Breast epithelium (tissue), 4 donors: ENCODE measurements at regions of chr12 and their contacts with region 1.

Region 1: DNA sequence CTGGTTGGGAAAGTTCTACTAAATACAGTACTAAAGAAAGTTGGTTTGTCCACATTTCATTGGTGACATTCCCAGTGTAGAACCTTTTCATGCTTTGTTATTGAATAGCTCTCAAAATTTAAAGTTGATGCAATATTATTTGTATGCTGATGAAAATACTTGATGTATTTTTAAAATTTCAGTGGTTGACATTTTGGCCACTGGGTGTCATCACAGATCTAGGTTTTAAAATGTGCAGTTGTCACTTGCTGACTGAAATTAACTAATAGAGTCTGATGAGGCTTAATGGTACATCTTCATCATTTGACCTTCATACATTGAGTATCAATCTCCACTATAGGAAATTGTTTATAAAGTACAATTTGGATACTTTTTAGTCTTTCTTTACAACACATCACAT is 37.1 kb downstream of the CMAS start:
- DNase-seq: no peak
- H3K4me3 ChIP-seq: no peak overlapping the region
- H3K27ac ChIP-seq: no peak overlapping the region
- H3K4me1 ChIP-seq: no peaks in the 10 kb centered on the region
- H3K27me3 ChIP-seq: no peaks in the 10 kb centered on the region
- CTCF ChIP-seq: peak; percentile 31 to 52 (median 49)
- POLR2A ChIP-seq: no peak

Region 2: DNA sequence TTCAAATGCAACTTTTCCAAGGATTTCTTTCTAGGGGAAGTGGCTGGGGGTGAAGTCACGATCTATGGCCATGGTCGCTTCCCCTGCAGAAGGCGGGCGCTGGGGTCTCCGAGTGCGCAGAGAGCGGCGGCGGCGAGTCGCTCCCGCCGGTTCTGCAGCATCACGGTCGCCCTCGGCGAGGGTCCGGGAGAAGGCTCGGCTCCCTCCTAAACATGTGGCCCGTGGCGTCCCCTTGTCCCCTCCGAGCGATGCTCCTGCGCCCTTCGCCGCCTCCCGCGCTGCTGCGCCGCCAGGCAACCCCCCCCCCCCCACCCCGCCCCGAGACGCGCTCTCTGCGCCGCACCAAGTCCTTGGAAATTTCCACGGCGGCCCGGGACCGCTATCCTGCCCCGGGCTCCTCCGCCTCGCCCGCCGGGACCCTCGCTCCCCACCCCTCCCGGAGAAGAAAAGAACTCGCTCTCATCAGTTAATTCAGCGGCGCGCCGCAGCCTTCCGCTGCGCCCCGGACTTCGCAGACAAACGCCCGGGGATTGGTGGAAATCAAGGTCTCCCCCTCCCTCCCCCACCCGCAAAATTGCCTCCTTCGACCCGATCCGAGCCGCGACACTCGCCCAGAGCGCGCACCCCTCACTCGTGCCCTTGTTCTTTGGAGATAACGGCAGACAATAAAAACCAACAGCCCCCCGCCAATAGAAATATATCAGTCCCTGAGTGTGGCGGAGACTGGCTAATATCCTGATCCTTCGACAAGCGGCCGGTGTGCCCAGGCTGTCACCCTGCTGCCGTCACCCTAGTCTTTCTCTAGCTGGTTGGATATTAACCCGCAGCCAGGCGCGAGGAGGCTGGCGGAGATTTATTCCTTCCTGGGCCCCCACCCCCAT is 251.5 kb after region 1 on chr12 and contains the start of gene ST8SIA1:
- intact Hi-C with region 1: loop called (anchors 5 kb)
- DNase-seq: no peak
- H3K4me3 ChIP-seq: peak within 1 kb of the TSS; percentile 60 to 91 (median 67)
- H3K27ac ChIP-seq: peak within 1 kb of the TSS; percentile 71 to 85
- H3K4me1 ChIP-seq: no peaks in the 10 kb centered on the region
- H3K27me3 ChIP-seq: no peaks in the 10 kb centered on the region
- CTCF ChIP-seq: no peak
- POLR2A ChIP-seq: no peak
- total RNA-seq, gene ST8SIA1: 2.6 to 11.1 (median 10.4) TPM